Natural killer cell (primary cell): ENCODE measurements at regions of chr9 and their contacts with region 1.

Region 1: GRCh38 chr9:114397848-114398605 is 10.2 kb upstream of the AKNA start:
- DNase-seq: peak; percentile 96
- ATAC-seq: peak; percentile 93 to 98 (median 93)
- H3K4me3 ChIP-seq: peak overlapping the region; percentile 93
- H3K4me3 Mint-ChIP-seq: peak overlapping the region; percentile 98
- H3K27ac ChIP-seq: peak overlapping the region; percentile 97
- H3K27ac Mint-ChIP-seq: peak overlapping the region; percentile 94 to 95
- H3K4me1 ChIP-seq: peaks cover 41% of the 10 kb centered on the region
- H3K4me1 Mint-ChIP-seq: peaks cover 11 to 42% of the 10 kb centered on the region in 2 donors
- H3K27me3 ChIP-seq: no peaks in the 10 kb centered on the region
- H3K27me3 Mint-ChIP-seq: no peaks in the 10 kb centered on the region
- CTCF ChIP-seq: no peak

Region 2: GRCh38 chr9:113695901-113696300 is 702.1 kb before region 1 on chr9:
- intact Hi-C with region 1: no loop called
- DNase-seq: no peak
- ATAC-seq: peak; percentile 43 to 69 (median 59)
- H3K4me3 ChIP-seq: no peak overlapping the region
- H3K4me3 Mint-ChIP-seq: peak overlapping the region; percentile 10
- H3K27ac ChIP-seq: peak overlapping the region; percentile 32
- H3K27ac Mint-ChIP-seq: peak overlapping the region; percentile 29 to 35
- H3K4me1 ChIP-seq: peaks cover 29% of the 10 kb centered on the region
- H3K4me1 Mint-ChIP-seq: peaks cover 35 to 42% of the 10 kb centered on the region in 2 donors
- H3K27me3 ChIP-seq: peaks cover 2% of the 10 kb centered on the region
- H3K27me3 Mint-ChIP-seq: no peaks in the 10 kb centered on the region
- CTCF ChIP-seq: no peak

Region 3: GRCh38 chr9:114366334-114367128 is 31.5 kb before region 1 on chr9:
- intact Hi-C with region 1: loop called (anchors 5 kb)
- DNase-seq: peak in 1 of 2 donors; percentile 78
- ATAC-seq: peak; percentile 27 to 49 (median 33)
- H3K4me3 ChIP-seq: no peak overlapping the region
- H3K4me3 Mint-ChIP-seq: peak overlapping the region; percentile 77
- H3K27ac ChIP-seq: peak overlapping the region; percentile 100
- H3K27ac Mint-ChIP-seq: peak overlapping the region; percentile 79 to 86
- H3K4me1 ChIP-seq: peaks cover 89% of the 10 kb centered on the region
- H3K4me1 Mint-ChIP-seq: peaks cover 54 to 69% of the 10 kb centered on the region in 2 donors
- H3K27me3 ChIP-seq: no peaks in the 10 kb centered on the region
- H3K27me3 Mint-ChIP-seq: no peaks in the 10 kb centered on the region
- CTCF ChIP-seq: no peak